ENCODE measurements at regions of chr7 and their contacts with region 1.

Region 1: GRCh38 chr7:28389504-28390395 is 22.6 kb upstream of the CREB5 start:
- DNase-seq: no peak
- ATAC-seq: peak; percentile 54
- H3K4me3 ChIP-seq: no peak overlapping the region
- H3K27ac ChIP-seq: no peak overlapping the region
- H3K4me1 ChIP-seq: peaks cover 10% of the 10 kb centered on the region
- H3K27me3 ChIP-seq: peaks cover 18% of the 10 kb centered on the region
- CTCF ChIP-seq: peak; percentile 82

Region 2: GRCh38 chr7:27808626-27809025 is 581.1 kb before region 1 on chr7:
- intact Hi-C with region 1: no loop called
- DNase-seq: no peak
- ATAC-seq: no peak
- H3K4me3 ChIP-seq: no peak overlapping the region
- H3K27ac ChIP-seq: no peak overlapping the region
- H3K4me1 ChIP-seq: peaks cover 1% of the 10 kb centered on the region
- H3K27me3 ChIP-seq: no peaks in the 10 kb centered on the region
- CTCF ChIP-seq: no peak

Region 3: DNA sequence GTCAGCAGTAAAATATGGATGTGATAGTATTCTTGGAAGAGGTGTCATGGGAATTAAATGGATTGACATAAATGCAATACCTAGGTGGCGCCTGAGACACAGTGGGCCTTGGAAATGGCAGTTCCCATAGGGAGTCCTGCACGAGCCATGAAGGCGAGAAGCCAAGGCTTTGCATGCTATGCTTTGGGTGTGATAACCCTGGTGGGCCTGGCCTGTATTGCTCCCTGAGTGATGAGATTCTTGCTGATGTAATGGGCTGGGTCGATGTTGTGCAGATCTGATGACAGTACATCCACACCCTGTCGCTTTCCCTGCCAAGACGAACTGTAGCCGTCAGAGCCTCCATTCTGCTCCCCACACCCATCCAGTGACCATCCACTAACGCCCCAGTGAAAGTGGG is 69.0 kb after region 1 on chr7:
- intact Hi-C with region 1: no loop called
- DNase-seq: no peak
- ATAC-seq: no peak
- H3K4me3 ChIP-seq: no peak overlapping the region
- H3K27ac ChIP-seq: no peak overlapping the region
- H3K4me1 ChIP-seq: no peaks in the 10 kb centered on the region
- H3K27me3 ChIP-seq: no peaks in the 10 kb centered on the region
- CTCF ChIP-seq: no peak

Region 4: DNA sequence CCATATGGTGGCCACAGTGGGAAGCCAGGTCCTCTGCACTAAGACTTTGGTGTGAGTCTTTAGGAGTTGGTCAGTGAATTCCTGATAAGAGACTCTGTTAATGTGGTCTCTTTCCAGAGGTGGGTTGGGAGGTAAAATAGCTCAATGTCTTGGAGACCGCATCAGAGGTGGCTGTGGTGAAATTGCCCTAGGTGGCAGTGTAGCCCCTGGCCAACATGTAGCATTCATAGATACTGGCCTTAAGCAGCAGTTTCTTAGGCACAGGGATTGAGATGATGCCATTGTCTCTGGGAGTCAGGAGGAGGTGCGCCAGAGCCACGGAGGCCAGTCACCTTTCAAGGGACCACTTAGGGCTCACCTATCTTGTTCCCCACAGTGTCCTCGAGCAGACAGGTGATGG is 225.3 kb after region 1 on chr7:
- intact Hi-C with region 1: loop called (anchors 10 kb)
- DNase-seq: no peak
- ATAC-seq: peak; percentile 39
- H3K4me3 ChIP-seq: no peak overlapping the region
- H3K27ac ChIP-seq: no peak overlapping the region
- H3K4me1 ChIP-seq: no peaks in the 10 kb centered on the region
- H3K27me3 ChIP-seq: no peaks in the 10 kb centered on the region
- CTCF ChIP-seq: no peak

Region 5: DNA sequence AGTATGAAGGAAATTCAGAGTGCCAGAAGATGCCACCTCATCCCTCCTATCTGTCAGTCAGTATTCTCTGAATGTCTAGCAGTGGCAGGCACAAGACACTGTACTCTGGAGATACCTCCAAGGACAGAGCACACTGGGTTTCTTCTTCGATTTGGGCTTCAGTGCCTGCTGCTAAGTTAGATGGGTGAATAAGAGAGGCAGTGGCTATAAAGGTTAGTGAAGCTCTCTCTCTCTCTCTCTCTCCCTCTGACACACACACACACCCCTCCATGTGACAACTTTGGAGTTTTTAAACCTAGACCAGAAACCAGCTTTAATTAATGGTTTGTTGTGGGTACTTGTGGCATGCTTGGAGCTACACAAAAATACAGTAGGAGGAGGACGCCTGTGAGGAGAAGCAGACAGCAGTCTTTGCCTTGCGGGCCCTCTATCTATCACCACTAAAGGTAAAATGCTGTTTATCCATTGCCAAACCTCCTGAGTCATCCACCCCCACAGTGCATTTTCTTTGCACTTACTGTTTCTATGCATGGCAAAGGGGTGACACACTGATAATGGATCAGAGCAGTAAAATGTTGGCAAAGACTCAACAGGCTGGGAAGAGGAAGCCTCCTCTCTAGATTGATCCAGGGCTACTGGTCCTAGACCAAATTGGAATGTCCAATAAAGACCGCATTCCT is 465.9 kb after region 1 on chr7:
- intact Hi-C with region 1: loop called (anchors 5 kb)
- DNase-seq: no peak
- ATAC-seq: no peak
- H3K4me3 ChIP-seq: no peak overlapping the region
- H3K27ac ChIP-seq: no peak overlapping the region
- H3K4me1 ChIP-seq: peaks cover 12% of the 10 kb centered on the region
- H3K27me3 ChIP-seq: peaks cover 34% of the 10 kb centered on the region
- CTCF ChIP-seq: no peak

Measured in upper lobe of right lung (tissue), 1 donor.